Activated B cell treated with CpG ODN at 0.5 μM for 24 hours (primary cell): ENCODE measurements at regions of chr10 and their contacts with region 1.

Region 1: GRCh38 chr10:119305860-119306513 is 98.6 kb downstream of the GRK5 start:
- DNase-seq: peak; percentile 77
- ATAC-seq: peak; percentile 72
- H3K4me3 Mint-ChIP-seq: peak overlapping the region; percentile 86
- H3K27ac Mint-ChIP-seq: peak overlapping the region; percentile 100
- H3K4me1 Mint-ChIP-seq: peaks cover 98% of the 10 kb centered on the region
- H3K27me3 Mint-ChIP-seq: no peaks in the 10 kb centered on the region
- CTCF ChIP-seq: no peak

Region 2: DNA sequence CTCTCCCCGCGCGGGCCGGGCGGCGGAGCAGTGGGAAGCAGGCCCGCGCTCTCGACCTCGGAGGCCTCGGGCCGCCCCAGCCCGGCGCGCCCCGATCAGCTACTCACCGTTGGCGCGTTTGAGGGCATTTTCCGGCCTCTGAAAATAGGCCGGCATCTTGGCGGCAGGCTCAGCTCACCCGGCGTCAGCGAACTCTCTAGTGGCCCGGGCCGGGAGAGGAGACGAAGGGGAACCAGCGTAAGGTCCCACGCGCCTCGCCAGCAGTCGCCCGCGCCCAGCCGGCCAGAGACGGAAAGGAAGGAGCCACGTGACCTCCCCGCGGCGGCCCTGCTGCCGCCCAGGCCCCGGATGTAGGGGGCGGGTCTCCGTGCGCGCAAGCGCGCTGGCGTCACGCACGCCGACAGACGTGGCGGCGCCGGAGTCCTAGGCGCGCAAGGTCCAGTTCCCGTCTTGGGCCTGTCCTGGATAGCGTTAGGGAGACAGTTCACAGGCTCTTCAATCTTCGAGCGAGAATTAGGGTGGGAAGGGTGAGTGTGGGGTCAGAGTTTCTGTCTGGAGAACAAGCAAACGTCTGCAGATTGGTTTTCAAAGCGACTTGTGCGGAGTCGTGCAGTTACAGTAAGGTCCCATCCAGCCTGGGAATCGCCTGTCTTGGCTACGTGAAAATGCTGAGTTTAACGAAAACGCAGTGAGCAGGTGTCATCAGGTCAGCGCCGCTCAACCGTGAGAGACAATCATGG is 225.3 kb before region 1 on chr10 and contains the start of gene EIF3A:
- CTCF ChIA-PET with region 1: no interaction called
- POLR2A ChIA-PET with region 1: no interaction called
- intact Hi-C with region 1: loop called (anchors 2 kb)
- DNase-seq: peak; percentile 97
- ATAC-seq: peak; percentile 79
- H3K4me3 Mint-ChIP-seq: peak within 1 kb of the TSS; percentile 89
- H3K27ac Mint-ChIP-seq: peak within 1 kb of the TSS; percentile 93
- H3K4me1 Mint-ChIP-seq: peaks cover 49% of the 10 kb centered on the region
- H3K27me3 Mint-ChIP-seq: no peaks in the 10 kb centered on the region
- CTCF ChIP-seq: no peak
- total RNA-seq, gene EIF3A: 109 and 114 TPM in 2 replicates

Region 3: DNA sequence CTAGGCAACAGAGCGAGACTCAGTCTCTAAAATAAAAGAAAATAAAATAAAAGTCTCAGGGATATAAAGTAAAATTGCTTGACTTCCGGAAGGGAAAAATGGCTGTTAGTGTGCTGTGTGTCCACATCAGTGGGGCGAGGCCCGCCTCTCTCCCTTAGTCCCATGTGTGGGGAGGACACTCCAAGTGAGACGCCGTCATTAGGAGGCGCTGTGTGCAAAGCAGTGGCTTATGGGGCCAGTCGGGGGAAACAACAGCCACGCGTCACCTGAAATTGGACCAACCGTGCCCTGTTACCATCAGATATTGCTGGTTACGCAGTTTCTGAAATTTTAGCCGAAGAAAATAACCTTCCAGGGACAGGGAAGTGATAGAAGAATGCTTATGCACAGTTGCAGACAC is 156.3 kb before region 1 on chr10:
- CTCF ChIA-PET with region 1: no interaction called
- POLR2A ChIA-PET with region 1: no interaction called
- intact Hi-C with region 1: no loop called
- DNase-seq: no peak
- ATAC-seq: no peak
- H3K4me3 Mint-ChIP-seq: no peak overlapping the region
- H3K27ac Mint-ChIP-seq: no peak overlapping the region
- H3K4me1 Mint-ChIP-seq: no peaks in the 10 kb centered on the region
- H3K27me3 Mint-ChIP-seq: no peaks in the 10 kb centered on the region
- CTCF ChIP-seq: no peak

Region 4: GRCh38 chr10:119207367-119207668 is 98.7 kb before region 1 on chr10 and contains the start of gene GRK5:
- CTCF ChIA-PET with region 1: interaction called, 31 read pairs
- POLR2A ChIA-PET with region 1: interaction called, 134 read pairs
- intact Hi-C with region 1: loop called (anchors 1 kb)
- DNase-seq: peak; percentile 96
- ATAC-seq: peak; percentile 81
- H3K4me3 Mint-ChIP-seq: peak within 1 kb of the TSS; percentile 93
- H3K27ac Mint-ChIP-seq: peak within 1 kb of the TSS; percentile 95
- H3K4me1 Mint-ChIP-seq: peaks cover 40% of the 10 kb centered on the region
- H3K27me3 Mint-ChIP-seq: no peaks in the 10 kb centered on the region
- CTCF ChIP-seq: no peak
- total RNA-seq, gene GRK5: 19.9 and 21.3 TPM in 2 replicates

Region 5: GRCh38 chr10:119281581-119282071 is 24.4 kb before region 1 on chr10:
- CTCF ChIA-PET with region 1: no interaction called
- POLR2A ChIA-PET with region 1: interaction called, 12 read pairs
- intact Hi-C with region 1: no loop called
- DNase-seq: no peak
- ATAC-seq: no peak
- H3K4me3 Mint-ChIP-seq: no peak overlapping the region
- H3K27ac Mint-ChIP-seq: peak overlapping the region; percentile 32
- H3K4me1 Mint-ChIP-seq: peaks cover 60% of the 10 kb centered on the region
- H3K27me3 Mint-ChIP-seq: no peaks in the 10 kb centered on the region
- CTCF ChIP-seq: no peak

Region 6: GRCh38 chr10:119416855-119417254 is 110.9 kb after region 1 on chr10:
- CTCF ChIA-PET with region 1: interaction called, 3 read pairs
- POLR2A ChIA-PET with region 1: interaction called, 9 read pairs
- intact Hi-C with region 1: loop called (anchors 2 kb)
- DNase-seq: peak; percentile 57
- ATAC-seq: peak; percentile 92
- H3K4me3 Mint-ChIP-seq: no peak overlapping the region
- H3K27ac Mint-ChIP-seq: no peak overlapping the region
- H3K4me1 Mint-ChIP-seq: peaks cover 2% of the 10 kb centered on the region
- H3K27me3 Mint-ChIP-seq: no peaks in the 10 kb centered on the region
- CTCF ChIP-seq: peak; percentile 22

Region 7: DNA sequence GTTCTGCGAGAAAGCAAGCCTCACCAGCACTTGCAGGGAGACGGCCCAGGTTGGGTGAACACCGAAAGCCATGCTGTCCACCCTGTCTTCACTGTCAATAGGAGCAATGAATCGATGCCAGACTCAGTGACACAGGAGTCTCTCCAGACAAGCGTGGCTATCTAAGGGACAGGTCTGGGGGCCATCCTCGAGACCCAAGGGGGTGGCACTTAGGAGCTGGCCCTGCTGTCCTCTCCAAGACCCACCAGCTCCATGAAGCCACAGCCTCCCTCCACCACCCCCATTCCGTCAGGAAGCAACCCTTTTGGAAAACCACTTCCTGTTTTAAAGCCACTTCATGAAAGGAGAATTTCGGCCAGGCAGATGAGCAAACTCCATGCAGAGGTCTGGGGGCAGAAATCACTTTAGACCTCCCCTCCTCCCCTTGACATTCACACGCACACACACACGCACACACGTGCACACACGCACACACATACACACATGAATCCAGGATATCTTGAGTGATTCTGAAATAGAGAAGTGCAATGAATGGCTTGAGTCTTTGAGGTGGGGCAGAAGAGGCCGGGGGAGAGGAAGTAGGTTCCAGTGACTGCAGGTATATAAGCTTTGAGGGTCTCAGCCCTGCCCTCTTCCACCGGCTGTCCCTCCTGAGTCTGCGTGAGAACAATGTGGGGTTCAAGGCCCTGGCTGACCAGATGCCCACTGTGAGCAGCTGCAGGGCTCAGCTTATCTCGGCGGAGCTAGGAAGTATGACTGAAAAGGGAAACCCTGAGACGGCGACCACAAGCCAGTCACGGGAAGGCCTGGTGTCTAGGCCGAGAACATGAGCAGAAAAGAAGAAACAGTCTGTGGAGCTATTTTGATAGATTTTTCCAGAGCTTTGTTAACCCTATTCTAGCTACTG is 211.5 kb after region 1 on chr10:
- CTCF ChIA-PET with region 1: no interaction called
- POLR2A ChIA-PET with region 1: interaction called, 5 read pairs
- intact Hi-C with region 1: loop called (anchors 2 kb)
- DNase-seq: peak; percentile 59
- ATAC-seq: peak; percentile 71
- H3K4me3 Mint-ChIP-seq: peak overlapping the region; percentile 67
- H3K27ac Mint-ChIP-seq: peak overlapping the region; percentile 94
- H3K4me1 Mint-ChIP-seq: peaks cover 34% of the 10 kb centered on the region
- H3K27me3 Mint-ChIP-seq: no peaks in the 10 kb centered on the region
- CTCF ChIP-seq: no peak

Region 8: DNA sequence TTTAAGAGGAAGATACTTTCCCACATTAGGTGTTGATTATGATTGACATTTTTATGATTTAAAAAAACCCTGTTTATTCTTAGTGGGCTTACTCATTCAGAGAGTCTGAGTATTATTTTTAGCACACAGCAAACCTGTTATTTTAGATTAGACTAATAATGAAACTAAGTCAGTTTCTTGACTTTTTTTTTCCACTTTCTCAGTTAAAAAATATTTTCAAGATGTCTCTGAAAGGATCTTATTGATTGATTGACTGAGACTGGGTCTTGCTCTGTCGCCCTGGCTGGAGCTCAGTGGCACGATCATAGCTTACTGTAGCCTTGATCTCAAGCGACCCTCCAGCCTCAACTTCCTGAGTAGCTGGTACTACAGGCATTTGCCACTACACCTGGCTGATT is 399.4 kb after region 1 on chr10:
- CTCF ChIA-PET with region 1: no interaction called
- POLR2A ChIA-PET with region 1: no interaction called
- intact Hi-C with region 1: loop called (anchors 2 kb)
- DNase-seq: peak; percentile 31
- ATAC-seq: peak; percentile 25
- H3K4me3 Mint-ChIP-seq: peak overlapping the region; percentile 59
- H3K27ac Mint-ChIP-seq: peak overlapping the region; percentile 97
- H3K4me1 Mint-ChIP-seq: peaks cover 95% of the 10 kb centered on the region
- H3K27me3 Mint-ChIP-seq: no peaks in the 10 kb centered on the region
- CTCF ChIP-seq: no peak